ENCODE measurements at regions of chr2 and their contacts with region 1.

Region 1: GRCh38 chr2:112749755-112750559 is 14.5 kb downstream of the CKAP2L start:
- DNase-seq: peak; percentile 88
- H3K4me3 Mint-ChIP-seq: no peak overlapping the region
- H3K27ac Mint-ChIP-seq: peak overlapping the region; percentile 71
- H3K4me1 Mint-ChIP-seq: peaks cover 46% of the 10 kb centered on the region
- H3K27me3 Mint-ChIP-seq: no peaks in the 10 kb centered on the region

Region 2: GRCh38 chr2:112737542-112738232 is 12.3 kb before region 1 on chr2:
- CTCF ChIA-PET with region 1: interaction called, 10 read pairs
- POLR2A ChIA-PET with region 1: no interaction called
- DNase-seq: no peak
- H3K4me3 Mint-ChIP-seq: no peak overlapping the region
- H3K27ac Mint-ChIP-seq: no peak overlapping the region
- H3K4me1 Mint-ChIP-seq: no peaks in the 10 kb centered on the region
- H3K27me3 Mint-ChIP-seq: no peaks in the 10 kb centered on the region

Region 3: DNA sequence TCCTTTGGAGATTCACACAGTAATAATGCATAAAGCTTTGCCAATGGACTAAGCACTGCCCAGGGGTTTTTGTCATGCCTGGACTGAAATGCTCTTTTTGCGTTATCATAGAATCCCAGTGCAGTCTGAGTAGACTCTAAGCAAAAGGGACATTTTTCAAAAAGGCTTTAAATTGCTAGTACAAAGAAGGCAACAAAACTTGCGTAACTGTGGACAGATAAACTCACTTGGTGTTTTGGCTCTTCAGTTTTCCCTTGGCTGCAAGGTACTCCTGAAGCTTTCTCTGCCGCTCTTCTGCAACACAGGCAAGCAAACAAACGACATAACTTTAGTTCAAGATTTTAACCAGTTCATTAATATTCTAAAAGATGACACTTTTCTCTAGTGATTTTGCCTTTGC is 12.3 kb after region 1 on chr2:
- CTCF ChIA-PET with region 1: interaction called, 11 read pairs
- POLR2A ChIA-PET with region 1: no interaction called
- DNase-seq: no peak
- H3K4me3 Mint-ChIP-seq: peak overlapping the region; percentile 98
- H3K27ac Mint-ChIP-seq: peak overlapping the region; percentile 21
- H3K4me1 Mint-ChIP-seq: peaks cover 49% of the 10 kb centered on the region
- H3K27me3 Mint-ChIP-seq: no peaks in the 10 kb centered on the region

Region 4: GRCh38 chr2:112884869-112885505 is 135.0 kb after region 1 on chr2:
- CTCF ChIA-PET with region 1: interaction called, 15 read pairs
- POLR2A ChIA-PET with region 1: interaction called, 5 read pairs
- DNase-seq: peak; percentile 66
- H3K4me3 Mint-ChIP-seq: peak overlapping the region; percentile 6
- H3K27ac Mint-ChIP-seq: no peak overlapping the region
- H3K4me1 Mint-ChIP-seq: peaks cover 27% of the 10 kb centered on the region
- H3K27me3 Mint-ChIP-seq: peaks cover 2% of the 10 kb centered on the region

Region 5: DNA sequence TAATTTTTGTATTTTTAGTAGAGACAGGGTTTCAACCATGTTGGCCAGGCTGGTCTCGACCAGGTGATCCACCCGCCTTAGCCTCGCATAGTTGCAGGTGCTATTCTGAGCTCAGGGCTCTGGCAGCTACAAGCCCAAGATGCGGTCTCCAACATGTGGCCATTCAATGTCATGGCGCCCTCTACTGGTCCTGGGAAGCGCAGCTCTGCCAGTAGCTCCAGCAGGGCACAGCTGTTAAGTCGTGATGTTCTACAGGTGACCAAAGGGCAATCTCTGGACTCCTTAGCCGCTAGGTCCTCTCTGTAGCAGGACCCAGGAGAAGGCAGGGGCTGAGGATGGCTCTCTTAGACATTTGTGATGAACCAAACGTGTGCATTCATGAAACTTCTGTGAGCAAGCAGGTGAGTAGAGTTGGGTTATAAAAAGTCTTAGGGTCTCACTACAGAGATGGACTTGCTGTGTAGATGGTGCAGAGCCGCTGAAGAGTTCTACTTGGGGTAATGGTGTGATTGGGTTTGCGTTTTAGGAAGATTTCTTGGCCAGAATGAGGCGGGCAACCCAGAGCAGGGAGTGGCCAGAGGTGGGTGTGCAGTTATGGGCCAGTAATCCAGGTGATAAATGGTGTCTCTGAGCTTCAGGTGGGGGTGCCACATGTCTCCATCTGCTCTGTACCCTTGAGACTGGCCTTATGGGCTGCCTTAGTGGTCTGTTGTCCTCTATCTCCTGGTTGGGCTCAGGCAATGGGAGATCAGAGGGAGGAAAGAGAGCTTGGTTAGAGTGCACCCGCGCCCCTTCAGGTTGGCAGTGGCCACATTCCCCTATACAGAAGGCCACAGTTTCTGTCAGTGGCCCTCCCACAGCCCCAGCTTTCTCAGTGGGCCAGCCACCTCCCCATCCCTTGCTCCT is 192.0 kb after region 1 on chr2:
- CTCF ChIA-PET with region 1: interaction called, 38 read pairs
- POLR2A ChIA-PET with region 1: no interaction called
- DNase-seq: peak; percentile 85
- H3K4me3 Mint-ChIP-seq: no peak overlapping the region
- H3K27ac Mint-ChIP-seq: no peak overlapping the region
- H3K4me1 Mint-ChIP-seq: no peaks in the 10 kb centered on the region
- H3K27me3 Mint-ChIP-seq: peaks cover 9% of the 10 kb centered on the region